Right ventricle myocardium superior (tissue), 1 donor: ENCODE measurements at regions of chr3 and their contacts with region 1.

Region 1: DNA sequence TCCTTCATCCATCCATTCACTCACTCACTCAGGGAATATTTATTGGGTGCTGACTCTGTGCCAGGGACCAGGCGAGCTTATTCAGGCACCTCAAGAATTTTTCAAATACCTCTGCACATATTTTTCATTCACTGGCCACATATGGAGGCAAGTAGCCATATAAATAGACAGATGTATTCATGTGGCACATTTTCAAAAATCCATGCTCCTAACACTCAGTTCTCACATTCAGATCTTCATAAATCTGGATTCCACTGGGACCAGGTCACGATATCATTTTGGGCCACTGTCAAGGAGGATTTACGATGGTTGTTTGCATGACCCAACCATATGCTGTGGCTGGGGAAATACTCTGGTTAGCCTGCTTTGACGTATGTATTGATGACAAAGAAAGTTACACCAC is 241.8 kb upstream of the LRTM1 start:
- DNase-seq: no peak
- ATAC-seq: no peak

Region 2: GRCh38 chr3:54427941-54428871 is 741.4 kb before region 1 on chr3:
- intact Hi-C with region 1: loop called (anchors 10 kb)
- DNase-seq: no peak
- ATAC-seq: peak; percentile 82

Region 3: DNA sequence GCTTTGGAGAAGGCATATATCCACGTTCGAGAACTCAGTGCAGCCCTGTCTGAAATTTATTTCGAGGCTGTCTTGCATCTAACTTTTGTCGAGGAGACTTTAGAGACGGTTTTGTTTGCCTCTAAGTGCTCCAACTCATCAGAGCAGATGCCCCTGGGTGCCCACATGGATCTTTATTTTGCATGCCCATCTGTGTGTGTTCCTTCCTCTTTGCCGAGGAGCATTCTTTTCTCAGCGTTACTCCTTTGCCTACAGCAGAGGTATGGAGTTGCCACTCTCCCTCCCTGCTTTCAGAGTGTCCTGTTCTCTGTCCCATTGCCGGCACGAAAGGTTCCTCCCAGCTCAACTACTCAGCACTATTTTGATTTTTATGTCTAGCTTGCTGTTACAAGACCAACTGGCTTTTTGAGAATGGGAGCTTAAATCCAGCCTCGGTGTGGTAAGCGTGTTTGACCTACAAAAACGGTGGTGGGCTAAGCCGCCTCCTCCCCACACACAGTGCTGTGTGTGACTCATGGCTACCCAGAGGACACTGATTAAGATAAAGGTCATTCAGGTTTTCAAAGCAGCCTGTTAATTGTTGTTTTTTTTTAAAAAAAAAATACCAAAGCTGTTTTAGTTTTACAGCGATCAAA is 306.4 kb before region 1 on chr3:
- intact Hi-C with region 1: loop called (anchors 10 kb)
- DNase-seq: no peak
- ATAC-seq: peak; percentile 34